ENCODE measurements at regions of chr20 and their contacts with region 1.

Region 1: GRCh38 chr20:1685304-1686052 is 27.9 kb upstream of the SIRPG start:
- DNase-seq: peak; percentile 43
- ATAC-seq: peak; percentile 39
- H3K4me3 Mint-ChIP-seq: peak overlapping the region; percentile 71
- H3K27ac Mint-ChIP-seq: peak overlapping the region; percentile 83
- H3K4me1 Mint-ChIP-seq: peaks cover 82% of the 10 kb centered on the region
- H3K27me3 Mint-ChIP-seq: no peaks in the 10 kb centered on the region

Region 2: GRCh38 chr20:1619861-1620444 is 65.5 kb before region 1 on chr20 and contains the start of gene SIRPB1:
- CTCF ChIA-PET with region 1: interaction called, 3 read pairs
- POLR2A ChIA-PET with region 1: no interaction called
- intact Hi-C with region 1: loop called in 1 of 2 experiments (anchors 2 kb)
- DNase-seq: peak; percentile 27
- ATAC-seq: peak; percentile 50
- H3K4me3 Mint-ChIP-seq: no peak within 1 kb of the TSS
- H3K27ac Mint-ChIP-seq: peak within 1 kb of the TSS; percentile 37
- H3K4me1 Mint-ChIP-seq: peaks cover 61% of the 10 kb centered on the region
- H3K27me3 Mint-ChIP-seq: no peaks in the 10 kb centered on the region
- total RNA-seq, gene SIRPB1: 1.0 to 2.1 TPM

Region 3: GRCh38 chr20:1631309-1632151 is 53.9 kb before region 1 on chr20:
- CTCF ChIA-PET with region 1: no interaction called
- POLR2A ChIA-PET with region 1: no interaction called
- intact Hi-C with region 1: loop called in 1 of 2 experiments (anchors 5 kb)
- DNase-seq: no peak
- ATAC-seq: no peak
- H3K4me3 Mint-ChIP-seq: peak overlapping the region; percentile 15
- H3K27ac Mint-ChIP-seq: peak overlapping the region; percentile 74
- H3K4me1 Mint-ChIP-seq: peaks cover 60% of the 10 kb centered on the region
- H3K27me3 Mint-ChIP-seq: no peaks in the 10 kb centered on the region

Region 4: GRCh38 chr20:1657556-1658334 is 27.7 kb before region 1 on chr20 and contains the start of gene SIRPG:
- CTCF ChIA-PET with region 1: no interaction called
- POLR2A ChIA-PET with region 1: interaction called, 4 read pairs
- intact Hi-C with region 1: loop called in 1 of 2 experiments (anchors 1 kb)
- DNase-seq: peak; percentile 59
- ATAC-seq: peak; percentile 54
- H3K4me3 Mint-ChIP-seq: peak within 1 kb of the TSS; percentile 84
- H3K27ac Mint-ChIP-seq: peak within 1 kb of the TSS; percentile 98
- H3K4me1 Mint-ChIP-seq: peaks cover 90% of the 10 kb centered on the region
- H3K27me3 Mint-ChIP-seq: no peaks in the 10 kb centered on the region
- total RNA-seq, gene SIRPG: 34.3 to 48.7 TPM

Region 5: GRCh38 chr20:1671891-1672669 is 13.4 kb before region 1 on chr20:
- CTCF ChIA-PET with region 1: interaction called, 3 read pairs
- POLR2A ChIA-PET with region 1: no interaction called
- intact Hi-C with region 1: loop called in 1 of 2 experiments (anchors 2 kb)
- DNase-seq: peak; percentile 70
- ATAC-seq: peak; percentile 70
- H3K4me3 Mint-ChIP-seq: peak overlapping the region; percentile 57
- H3K27ac Mint-ChIP-seq: peak overlapping the region; percentile 97
- H3K4me1 Mint-ChIP-seq: peaks cover 99% of the 10 kb centered on the region
- H3K27me3 Mint-ChIP-seq: no peaks in the 10 kb centered on the region

Region 6: GRCh38 chr20:1700990-1701389 is 15.5 kb after region 1 on chr20:
- CTCF ChIA-PET with region 1: no interaction called
- POLR2A ChIA-PET with region 1: no interaction called
- intact Hi-C with region 1: no loop called
- DNase-seq: no peak
- ATAC-seq: no peak
- H3K4me3 Mint-ChIP-seq: no peak overlapping the region
- H3K27ac Mint-ChIP-seq: no peak overlapping the region
- H3K4me1 Mint-ChIP-seq: peaks cover 19% of the 10 kb centered on the region
- H3K27me3 Mint-ChIP-seq: no peaks in the 10 kb centered on the region

Region 7: DNA sequence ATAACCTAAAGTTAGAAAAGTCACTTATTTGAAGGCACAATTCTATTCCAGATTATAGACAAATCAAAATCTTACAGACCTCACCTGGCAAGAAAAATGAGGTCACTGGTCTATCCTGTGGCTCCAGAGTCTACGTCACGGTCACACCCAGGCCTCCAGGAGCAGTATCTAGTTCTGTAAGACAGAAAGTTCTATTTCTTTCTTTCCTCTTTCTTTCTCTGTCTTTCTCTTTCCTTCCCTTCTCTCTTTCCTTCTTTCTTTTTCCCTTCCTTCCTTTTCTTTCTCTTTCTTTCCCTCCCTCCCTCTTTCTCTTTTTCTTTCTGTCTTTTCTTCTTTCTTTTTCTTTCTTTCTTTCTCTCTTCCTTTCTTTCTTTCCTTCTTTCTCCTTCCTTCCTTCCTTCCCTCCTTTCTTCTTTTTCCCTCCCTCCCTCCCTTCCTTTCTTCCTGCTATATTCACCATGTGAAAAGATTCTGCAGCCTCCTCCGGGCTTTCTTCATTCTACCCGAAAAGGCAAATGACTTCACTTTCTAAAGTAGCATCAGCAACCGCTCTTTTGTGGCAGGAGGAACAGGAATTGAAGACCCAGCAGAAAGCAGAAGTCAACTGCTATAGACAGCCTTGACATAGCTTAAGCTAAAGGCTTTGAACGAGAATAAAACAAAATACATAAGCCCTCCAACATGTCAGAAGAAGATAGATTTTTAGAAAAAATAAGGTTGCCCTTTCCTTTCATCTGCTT is 56.0 kb after region 1 on chr20:
- CTCF ChIA-PET with region 1: no interaction called
- POLR2A ChIA-PET with region 1: no interaction called
- intact Hi-C with region 1: no loop called
- DNase-seq: no peak
- ATAC-seq: no peak
- H3K4me3 Mint-ChIP-seq: no peak overlapping the region
- H3K27ac Mint-ChIP-seq: no peak overlapping the region
- H3K4me1 Mint-ChIP-seq: peaks cover 2% of the 10 kb centered on the region
- H3K27me3 Mint-ChIP-seq: peaks cover 6% of the 10 kb centered on the region

Measured in activated CD4-positive, alpha-beta T cell treated with anti-CD3 and anti-CD28 coated beads for 36 hours (primary cell).